Naive thymus-derived CD8-positive, alpha-beta T cell (primary cell): ENCODE measurements at regions of chr1 and their contacts with region 1.

Region 1: DNA sequence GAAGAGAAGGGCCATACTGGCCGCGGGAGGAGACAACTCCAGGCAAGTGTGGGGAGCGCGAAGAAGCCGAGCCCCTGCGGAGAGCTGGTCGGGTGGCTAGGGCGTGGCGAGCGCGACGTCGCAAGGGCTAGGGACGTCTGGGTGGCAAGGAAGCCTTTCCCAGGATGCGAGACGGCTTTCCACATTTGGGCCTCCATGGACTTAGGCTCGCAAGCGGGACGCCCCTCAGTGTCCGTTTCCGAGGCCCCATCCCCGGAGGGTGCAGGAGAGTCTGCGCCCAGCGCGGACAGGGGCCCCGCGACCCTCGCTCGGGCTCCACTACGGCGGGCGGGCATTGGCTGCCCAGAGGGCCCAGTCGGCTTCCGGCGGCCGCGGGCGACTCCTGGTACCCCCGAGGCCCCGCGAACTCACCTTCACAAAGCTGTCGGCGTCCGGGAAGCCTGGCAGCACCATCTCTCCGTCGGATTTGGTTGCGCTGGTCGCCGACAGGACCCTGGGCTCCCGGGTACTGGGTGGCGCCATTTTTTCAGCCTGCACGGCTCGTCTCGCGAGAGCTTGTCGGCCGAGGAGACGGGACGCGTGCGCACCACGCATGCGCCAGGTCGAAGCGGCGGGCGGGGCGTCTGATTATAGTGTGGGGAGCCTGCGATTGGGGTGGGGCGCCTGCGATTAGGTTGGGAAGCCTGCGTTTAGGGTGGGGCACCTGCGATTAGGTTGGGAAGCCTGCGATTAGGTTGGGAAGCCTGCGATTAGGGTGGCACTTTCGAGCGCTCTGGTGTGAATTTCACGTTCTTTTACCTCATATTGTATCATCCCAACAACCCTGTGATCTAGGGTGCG is at the start of gene EXOSC10:
- DNase-seq: peak; percentile 90 to 97 (median 94)
- ATAC-seq: peak; percentile 97 to 98
- H3K4me3 Mint-ChIP-seq: peak within 1 kb of the TSS; percentile 89 to 98 (median 95)
- H3K27ac Mint-ChIP-seq: peak within 1 kb of the TSS; percentile 90 to 98 (median 96)
- H3K4me1 Mint-ChIP-seq: peaks cover 9 to 23% (median 15%) of the 10 kb centered on the region in 4 donors
- H3K27me3 Mint-ChIP-seq: no peaks in the 10 kb centered on the region
- polyA plus RNA-seq, gene EXOSC10: 31.7 to 45.5 (median 35.6) TPM

Region 2: GRCh38 chr1:11012250-11013171 is 87.0 kb before region 1 on chr1 and contains the start of gene TARDBP:
- POLR2A ChIA-PET with region 1: interaction called, 12 read pairs
- DNase-seq: peak; percentile 81 to 99 (median 90)
- ATAC-seq: peak; percentile 88 to 89
- H3K4me3 Mint-ChIP-seq: peak within 1 kb of the TSS; percentile 84 to 96 (median 90)
- H3K27ac Mint-ChIP-seq: peak within 1 kb of the TSS; percentile 96 to 99 (median 98)
- H3K4me1 Mint-ChIP-seq: peaks cover 6 to 43% (median 36%) of the 10 kb centered on the region in 4 donors
- H3K27me3 Mint-ChIP-seq: no peaks in the 10 kb centered on the region
- polyA plus RNA-seq, gene TARDBP: 46.6 to 65.2 (median 54.2) TPM

Region 3: DNA sequence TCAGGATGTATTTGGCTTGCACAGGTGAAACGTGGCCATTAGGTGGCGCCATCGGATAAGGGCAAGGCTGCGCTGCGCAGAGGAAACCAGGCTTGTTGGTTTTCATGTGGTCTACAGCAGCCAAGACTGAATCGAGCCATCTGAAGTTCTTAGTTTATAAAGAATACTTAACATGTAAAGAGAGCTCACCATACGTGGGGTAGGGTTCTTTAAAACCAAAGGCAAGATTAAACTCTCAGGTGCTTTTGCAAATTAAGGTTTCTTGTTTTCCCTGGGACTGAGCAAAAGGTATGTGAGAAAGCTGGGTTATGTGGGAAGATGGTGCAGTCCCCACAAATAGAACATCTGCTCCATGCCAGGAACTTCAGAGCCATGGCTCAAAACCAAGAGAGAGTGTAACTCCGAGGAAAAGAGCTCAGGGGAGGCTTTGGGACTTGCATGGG is 61.8 kb before region 1 on chr1:
- POLR2A ChIA-PET with region 1: interaction called, 10 read pairs
- DNase-seq: peak; percentile 79 to 94 (median 88)
- ATAC-seq: peak; percentile 100
- H3K4me3 Mint-ChIP-seq: no peak overlapping the region
- H3K27ac Mint-ChIP-seq: peak overlapping the region in 1 of 10 donors; percentile 37
- H3K4me1 Mint-ChIP-seq: peaks cover 0 to 7% (median 6%) of the 10 kb centered on the region in 4 donors
- H3K27me3 Mint-ChIP-seq: peaks cover 0 to 4% (median 4%) of the 10 kb centered on the region in 5 donors

Region 4: GRCh38 chr1:11059990-11060830 is 39.3 kb before region 1 on chr1 and contains the start of gene SRM:
- POLR2A ChIA-PET with region 1: interaction called, 13 read pairs
- DNase-seq: peak; percentile 84 to 96 (median 89)
- ATAC-seq: peak; percentile 92 to 93
- H3K4me3 Mint-ChIP-seq: peak within 1 kb of the TSS; percentile 90 to 95 (median 94)
- H3K27ac Mint-ChIP-seq: peak within 1 kb of the TSS; percentile 89 to 97 (median 94)
- H3K4me1 Mint-ChIP-seq: peaks cover 15 to 41% (median 33%) of the 10 kb centered on the region in 4 donors
- H3K27me3 Mint-ChIP-seq: no peaks in the 10 kb centered on the region
- polyA plus RNA-seq, gene SRM: 95.2 to 204 (median 97.9) TPM

Region 5: GRCh38 chr1:11158720-11159321 is 59.3 kb after region 1 on chr1:
- POLR2A ChIA-PET with region 1: no interaction called
- DNase-seq: no peak
- ATAC-seq: no peak
- H3K4me3 Mint-ChIP-seq: no peak overlapping the region
- H3K27ac Mint-ChIP-seq: peak overlapping the region in 2 of 10 donors; percentile 12 to 21
- H3K4me1 Mint-ChIP-seq: peaks cover 0 to 5% (median 3%) of the 10 kb centered on the region in 4 donors
- H3K27me3 Mint-ChIP-seq: no peaks in the 10 kb centered on the region